ENCODE measurements at regions of chr7 and their contacts with region 1.

Region 1: GRCh38 chr7:92528188-92528957 is at the starts of genes PEX1 and RBM48:
- DNase-seq: peak; percentile 94 to 100 (median 98)
- ATAC-seq: peak; percentile 97
- H3K4me3 ChIP-seq: peak within 1 kb of the TSS; percentile 84
- H3K27ac ChIP-seq: peak within 1 kb of the TSS; percentile 98
- H3K4me1 ChIP-seq: peaks cover 7 to 10% of the 10 kb centered on the region in 2 experiments; a peak in 3 of 5 replicates
- H3K27me3 ChIP-seq: no peaks in the 10 kb centered on the region
- CTCF ChIP-seq: peak; percentile 64 to 67 (median 66)
- EP300 ChIP-seq: peak; percentile 54
- POLR2A ChIP-seq: peak; percentile 96
- RAD21 ChIP-seq: peak; percentile 19 to 23; a peak in 1 of 4 replicates
- polyA plus RNA-seq, gene PEX1: 9.4 to 10.3 TPM
- polyA plus RNA-seq, gene RBM48: 20.9 to 35.1 TPM

Region 2: DNA sequence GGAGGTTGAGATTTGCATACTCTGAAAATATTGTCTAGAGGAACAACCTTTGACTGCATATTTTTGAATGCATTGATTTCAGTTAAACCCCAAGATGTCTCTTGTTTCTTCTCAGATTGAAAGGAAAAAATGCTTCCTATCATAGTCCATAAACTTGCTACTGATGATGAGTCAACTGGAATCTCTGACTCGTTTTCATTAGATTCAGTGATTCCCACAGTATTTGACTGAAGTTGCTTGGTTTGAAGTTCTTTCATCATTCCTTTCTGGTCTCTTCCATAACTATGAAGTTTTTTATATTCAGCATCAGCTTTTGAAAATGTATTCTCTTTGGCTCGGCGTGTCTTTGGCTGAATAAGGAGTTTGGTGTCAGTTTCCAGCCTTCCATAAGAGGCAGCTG is 10.7 kb before region 1 on chr7:
- CTCF ChIA-PET with region 1: no interaction called
- POLR2A ChIA-PET with region 1: interaction called, 11 read pairs
- in situ Hi-C with region 1: no loop called
- intact Hi-C with region 1: no loop called
- DNase-seq: no peak
- ATAC-seq: no peak
- H3K4me3 ChIP-seq: no peak overlapping the region
- H3K27ac ChIP-seq: no peak overlapping the region
- H3K4me1 ChIP-seq: no peaks in the 10 kb centered on the region
- H3K27me3 ChIP-seq: no peaks in the 10 kb centered on the region
- CTCF ChIP-seq: no peak
- EP300 ChIP-seq: no peak
- POLR2A ChIP-seq: no peak
- RAD21 ChIP-seq: no peak

Region 3: GRCh38 chr7:92590711-92591310 is 62.4 kb after region 1 on chr7:
- CTCF ChIA-PET with region 1: interaction called, 3 read pairs
- POLR2A ChIA-PET with region 1: interaction called, 4 read pairs
- in situ Hi-C with region 1: no loop called
- intact Hi-C with region 1: loop called (anchors 2 kb)
- DNase-seq: no peak
- ATAC-seq: no peak
- H3K4me3 ChIP-seq: peak overlapping the region; percentile 75
- H3K27ac ChIP-seq: no peak overlapping the region
- H3K4me1 ChIP-seq: peaks cover 16 to 21% of the 10 kb centered on the region in 2 experiments; a peak in 4 of 5 replicates
- H3K27me3 ChIP-seq: no peaks in the 10 kb centered on the region; a peak in 1 of 5 replicates
- CTCF ChIP-seq: no peak
- EP300 ChIP-seq: no peak
- POLR2A ChIP-seq: no peak
- RAD21 ChIP-seq: no peak

Measured in K562 (cell line).